Heart left ventricle (tissue), 16 donors: ENCODE measurements at regions of chr22 and their contacts with region 1.

Region 1: DNA sequence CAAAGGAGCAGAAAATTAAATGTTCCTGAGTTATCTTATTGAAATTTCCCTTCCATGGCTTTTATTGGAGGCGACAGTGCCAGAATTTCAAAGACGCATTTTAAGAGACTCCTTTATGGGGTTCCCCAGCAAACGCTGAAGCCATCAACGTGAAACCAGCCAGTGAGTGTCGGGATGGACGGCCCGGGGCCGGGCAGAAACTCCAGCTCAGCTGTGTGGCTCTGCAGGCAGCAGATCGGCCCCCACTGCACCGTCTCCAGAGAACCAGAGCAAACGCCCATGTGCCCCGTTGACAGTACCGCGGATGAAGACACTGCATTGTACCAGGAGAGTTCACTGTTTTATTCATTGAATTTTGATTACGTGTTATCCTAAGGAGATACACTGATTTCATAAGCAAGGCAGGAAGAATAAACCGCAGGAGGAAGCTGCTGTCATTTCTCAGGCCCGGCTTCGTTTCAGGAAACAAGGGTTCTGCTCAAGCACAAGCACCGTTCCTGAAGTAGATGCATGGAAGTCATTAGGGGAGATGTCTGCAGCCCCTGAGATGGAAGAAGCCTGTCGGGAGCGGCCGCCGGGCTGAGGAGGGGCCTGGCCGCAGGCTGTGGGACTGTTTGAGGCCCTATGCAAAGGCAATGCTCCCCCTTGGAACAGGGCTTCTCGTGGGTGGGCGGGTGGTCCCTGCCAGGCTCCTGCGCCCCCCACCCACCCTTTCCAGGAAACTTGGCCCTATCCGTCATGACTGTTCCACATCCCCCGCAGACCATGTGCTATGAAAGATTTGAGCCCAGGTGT is 639.7 kb downstream of the TBC1D22A start:
- DNase-seq: no peak
- ATAC-seq: no peak
- H3K4me3 ChIP-seq: no peak overlapping the region
- H3K27ac ChIP-seq: no peak overlapping the region
- H3K4me1 ChIP-seq: no peaks in the 10 kb centered on the region
- H3K27me3 ChIP-seq: peaks cover 0 to 11% (median 0%) of the 10 kb centered on the region in 9 donors
- CTCF ChIP-seq: no peak
- POLR2A ChIP-seq: no peak

Region 2: DNA sequence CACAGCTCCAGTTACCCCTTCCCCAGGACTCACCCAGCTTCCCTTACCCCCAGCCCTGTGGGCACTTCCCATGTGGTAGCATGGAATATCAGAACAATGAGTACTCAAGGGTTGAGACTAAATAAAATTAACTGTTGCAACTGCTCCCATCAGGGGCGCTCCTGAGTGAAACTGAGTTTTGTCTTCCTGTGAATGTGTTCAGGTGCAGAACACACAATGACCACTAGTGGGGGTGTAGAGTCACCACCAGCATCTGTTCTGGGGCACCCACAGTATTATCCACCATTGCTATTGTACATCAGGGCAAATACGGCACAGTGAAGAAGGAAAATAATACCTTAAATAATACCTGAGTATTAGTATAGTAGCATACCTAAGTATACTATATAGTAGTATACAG is 50.0 kb after region 1 on chr22:
- intact Hi-C with region 1: loop called in 1 of 10 experiments (anchors 5 kb)
- DNase-seq: no peak
- ATAC-seq: no peak
- H3K4me3 ChIP-seq: no peak overlapping the region
- H3K27ac ChIP-seq: no peak overlapping the region
- H3K4me1 ChIP-seq: peaks cover 0 to 4% (median 0%) of the 10 kb centered on the region in 12 donors
- H3K27me3 ChIP-seq: peaks cover 0 to 5% (median 0%) of the 10 kb centered on the region in 9 donors
- CTCF ChIP-seq: peak in 9 of 12 donors; percentile 10 to 49 (median 19)
- POLR2A ChIP-seq: no peak

Region 3: GRCh38 chr22:47484960-47485569 is 82.9 kb after region 1 on chr22:
- intact Hi-C with region 1: no loop called
- DNase-seq: no peak
- ATAC-seq: no peak
- H3K4me3 ChIP-seq: no peak overlapping the region
- H3K27ac ChIP-seq: no peak overlapping the region
- H3K4me1 ChIP-seq: no peaks in the 10 kb centered on the region
- H3K27me3 ChIP-seq: peaks cover 0 to 25% (median 0%) of the 10 kb centered on the region in 9 donors
- CTCF ChIP-seq: no peak
- POLR2A ChIP-seq: no peak